HCT116 (cell line): ENCODE measurements at regions of chr14 and their contacts with region 1.

Region 1: DNA sequence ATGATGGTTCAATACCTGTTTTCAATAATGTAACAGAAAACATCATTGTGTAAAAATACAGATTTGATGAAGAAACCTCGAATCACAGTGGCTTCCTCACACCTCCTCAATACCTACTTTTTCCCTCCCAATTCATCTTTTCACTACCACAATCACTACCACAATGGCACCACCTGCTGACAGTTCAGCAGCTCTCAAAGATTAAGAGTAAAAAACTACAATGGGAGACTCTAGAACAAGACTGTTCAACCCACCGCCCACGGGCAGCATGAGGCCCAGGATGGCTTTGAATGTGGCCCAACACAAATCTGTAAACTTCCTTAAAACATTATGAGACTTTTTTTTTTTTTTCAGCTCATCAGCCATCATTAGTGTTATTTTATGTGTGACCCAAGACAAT is 15.2 kb downstream of the MED6 start:
- DNase-seq: no peak
- ATAC-seq: peak; percentile 61
- H3K4me3 ChIP-seq: no peak overlapping the region
- H3K27ac ChIP-seq: no peak overlapping the region
- H3K4me1 ChIP-seq: no peaks in the 10 kb centered on the region
- H3K27me3 ChIP-seq: no peaks in the 10 kb centered on the region
- CTCF ChIP-seq: peak in 2 of 3 experiments; percentile 12 to 21; a peak in 2 of 6 replicates
- POLR2A ChIP-seq: no peak
- RAD21 ChIP-seq: peak; percentile 27; the same call in 1 of the 2 replicates

Region 2: GRCh38 chr14:70096866-70097265 is 488.4 kb before region 1 on chr14:
- CTCF ChIA-PET with region 1: no interaction called
- POLR2A ChIA-PET with region 1: no interaction called
- RAD21 ChIA-PET with region 1: no interaction called
- intact Hi-C with region 1: loop called (anchors 5 kb)
- DNase-seq: no peak
- ATAC-seq: peak; percentile 89
- H3K4me3 ChIP-seq: no peak overlapping the region
- H3K27ac ChIP-seq: no peak overlapping the region
- H3K4me1 ChIP-seq: no peaks in the 10 kb centered on the region
- H3K27me3 ChIP-seq: peaks cover 76% of the 10 kb centered on the region
- CTCF ChIP-seq: peak; percentile 7 to 58 (median 49); a peak in 4 of 6 replicates
- POLR2A ChIP-seq: no peak
- RAD21 ChIP-seq: peak; percentile 36

Region 3: DNA sequence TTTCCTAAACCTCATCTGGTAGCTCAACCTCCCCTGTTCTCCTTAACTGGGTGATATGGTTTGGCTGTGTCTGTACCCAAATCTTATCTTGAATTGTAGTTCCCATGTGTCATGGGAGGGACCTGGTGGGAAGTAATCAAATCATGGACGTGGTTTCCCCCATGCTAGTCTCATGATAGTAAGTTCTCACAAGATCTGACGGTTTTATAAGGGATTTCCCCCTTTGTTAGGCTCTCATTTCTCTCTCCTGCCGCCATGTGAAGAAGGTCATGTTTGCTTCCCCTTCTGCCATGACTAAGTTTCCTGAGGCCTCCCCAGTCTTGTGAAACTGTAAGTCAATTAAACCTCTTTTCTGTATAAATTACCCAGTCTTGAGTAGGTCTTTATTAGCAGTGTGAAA is 245.2 kb before region 1 on chr14:
- CTCF ChIA-PET with region 1: no interaction called
- POLR2A ChIA-PET with region 1: no interaction called
- RAD21 ChIA-PET with region 1: no interaction called
- intact Hi-C with region 1: loop called (anchors 5 kb)
- DNase-seq: no peak
- ATAC-seq: no peak
- H3K4me3 ChIP-seq: no peak overlapping the region
- H3K27ac ChIP-seq: no peak overlapping the region
- H3K4me1 ChIP-seq: no peaks in the 10 kb centered on the region
- H3K27me3 ChIP-seq: no peaks in the 10 kb centered on the region
- CTCF ChIP-seq: no peak
- POLR2A ChIP-seq: no peak
- RAD21 ChIP-seq: no peak

Region 4: GRCh38 chr14:70472253-70473159 is 112.7 kb before region 1 on chr14:
- CTCF ChIA-PET with region 1: no interaction called
- POLR2A ChIA-PET with region 1: no interaction called
- RAD21 ChIA-PET with region 1: no interaction called
- intact Hi-C with region 1: no loop called
- DNase-seq: no peak
- ATAC-seq: no peak
- H3K4me3 ChIP-seq: no peak overlapping the region
- H3K27ac ChIP-seq: no peak overlapping the region
- H3K4me1 ChIP-seq: no peaks in the 10 kb centered on the region
- H3K27me3 ChIP-seq: no peaks in the 10 kb centered on the region
- CTCF ChIP-seq: no peak
- POLR2A ChIP-seq: no peak
- RAD21 ChIP-seq: no peak

Region 5: DNA sequence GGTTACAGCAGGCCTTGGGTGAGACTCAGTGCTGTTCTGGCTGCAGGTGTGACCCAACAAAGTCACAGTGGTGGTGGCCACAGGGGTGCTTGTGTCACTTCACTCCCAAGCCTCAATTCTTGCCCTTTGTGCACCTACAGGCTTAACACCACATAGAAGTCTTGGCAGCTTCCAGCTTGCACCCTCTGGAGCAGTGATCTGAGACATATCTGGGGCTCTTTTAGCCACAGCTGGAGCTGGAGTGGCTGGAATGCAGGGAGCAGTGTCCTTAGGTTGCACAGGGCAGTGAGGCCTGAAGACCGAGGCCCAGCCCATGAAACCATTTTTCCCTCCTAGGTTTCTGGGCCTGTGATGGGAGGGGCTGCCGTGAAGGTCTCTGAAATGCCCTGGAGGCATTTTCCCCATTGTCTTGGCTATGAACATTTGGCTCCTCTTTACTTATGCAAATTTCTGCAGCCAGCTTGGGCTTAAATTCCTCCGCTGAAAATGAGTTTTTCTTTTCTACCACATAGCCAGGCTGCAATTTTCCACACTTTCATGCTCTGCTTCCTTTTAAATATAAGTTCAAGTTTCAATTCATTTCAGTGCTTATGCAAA is 95.5 kb before region 1 on chr14:
- CTCF ChIA-PET with region 1: no interaction called
- POLR2A ChIA-PET with region 1: no interaction called
- RAD21 ChIA-PET with region 1: no interaction called
- intact Hi-C with region 1: no loop called
- DNase-seq: no peak
- ATAC-seq: no peak
- H3K4me3 ChIP-seq: no peak overlapping the region
- H3K27ac ChIP-seq: no peak overlapping the region
- H3K4me1 ChIP-seq: no peaks in the 10 kb centered on the region
- H3K27me3 ChIP-seq: no peaks in the 10 kb centered on the region
- CTCF ChIP-seq: no peak
- POLR2A ChIP-seq: no peak
- RAD21 ChIP-seq: no peak

Region 6: GRCh38 chr14:70670992-70671651 is 85.9 kb after region 1 on chr14:
- CTCF ChIA-PET with region 1: no interaction called
- POLR2A ChIA-PET with region 1: no interaction called
- RAD21 ChIA-PET with region 1: no interaction called
- intact Hi-C with region 1: no loop called
- DNase-seq: no peak
- ATAC-seq: no peak
- H3K4me3 ChIP-seq: no peak overlapping the region
- H3K27ac ChIP-seq: no peak overlapping the region
- H3K4me1 ChIP-seq: peaks cover 4 to 10% of the 10 kb centered on the region in 2 experiments
- H3K27me3 ChIP-seq: no peaks in the 10 kb centered on the region
- CTCF ChIP-seq: no peak
- POLR2A ChIP-seq: no peak
- RAD21 ChIP-seq: no peak